Transverse colon (tissue), 4 donors: ENCODE measurements at regions of chr5 and their contacts with region 1.

Region 1: GRCh38 chr5:88875341-88876234 is 7.4 kb downstream of the MEF2C start:
- DNase-seq: no peak
- H3K4me3 ChIP-seq: no peak overlapping the region
- H3K27ac ChIP-seq: peak overlapping the region; percentile 21 to 62 (median 27)
- H3K4me1 ChIP-seq: peaks cover 6 to 55% (median 31%) of the 10 kb centered on the region in 4 donors
- H3K27me3 ChIP-seq: no peaks in the 10 kb centered on the region
- CTCF ChIP-seq: no peak
- EP300 ChIP-seq: no peak
- POLR2A ChIP-seq: no peak

Region 2: GRCh38 chr5:88836195-88836838 is 39.3 kb before region 1 on chr5:
- in situ Hi-C with region 1: no loop called
- intact Hi-C with region 1: loop called (anchors 5 kb)
- DNase-seq: no peak
- H3K4me3 ChIP-seq: peak overlapping the region in 1 of 4 donors; percentile 4
- H3K27ac ChIP-seq: peak overlapping the region; percentile 65 to 76 (median 70)
- H3K4me1 ChIP-seq: peaks cover 0 to 17% (median 14%) of the 10 kb centered on the region in 4 donors
- H3K27me3 ChIP-seq: no peaks in the 10 kb centered on the region
- CTCF ChIP-seq: no peak
- EP300 ChIP-seq: no peak
- POLR2A ChIP-seq: no peak

Region 3: GRCh38 chr5:88925692-88926490 is 50.3 kb after region 1 on chr5:
- in situ Hi-C with region 1: no loop called
- intact Hi-C with region 1: no loop called
- DNase-seq: no peak
- H3K4me3 ChIP-seq: no peak overlapping the region
- H3K27ac ChIP-seq: no peak overlapping the region
- H3K4me1 ChIP-seq: peaks cover 0 to 13% (median 2%) of the 10 kb centered on the region in 4 donors
- H3K27me3 ChIP-seq: no peaks in the 10 kb centered on the region
- CTCF ChIP-seq: no peak
- EP300 ChIP-seq: no peak
- POLR2A ChIP-seq: no peak